ENCODE measurements at regions of chr16 and their contacts with region 1.

Region 1: DNA sequence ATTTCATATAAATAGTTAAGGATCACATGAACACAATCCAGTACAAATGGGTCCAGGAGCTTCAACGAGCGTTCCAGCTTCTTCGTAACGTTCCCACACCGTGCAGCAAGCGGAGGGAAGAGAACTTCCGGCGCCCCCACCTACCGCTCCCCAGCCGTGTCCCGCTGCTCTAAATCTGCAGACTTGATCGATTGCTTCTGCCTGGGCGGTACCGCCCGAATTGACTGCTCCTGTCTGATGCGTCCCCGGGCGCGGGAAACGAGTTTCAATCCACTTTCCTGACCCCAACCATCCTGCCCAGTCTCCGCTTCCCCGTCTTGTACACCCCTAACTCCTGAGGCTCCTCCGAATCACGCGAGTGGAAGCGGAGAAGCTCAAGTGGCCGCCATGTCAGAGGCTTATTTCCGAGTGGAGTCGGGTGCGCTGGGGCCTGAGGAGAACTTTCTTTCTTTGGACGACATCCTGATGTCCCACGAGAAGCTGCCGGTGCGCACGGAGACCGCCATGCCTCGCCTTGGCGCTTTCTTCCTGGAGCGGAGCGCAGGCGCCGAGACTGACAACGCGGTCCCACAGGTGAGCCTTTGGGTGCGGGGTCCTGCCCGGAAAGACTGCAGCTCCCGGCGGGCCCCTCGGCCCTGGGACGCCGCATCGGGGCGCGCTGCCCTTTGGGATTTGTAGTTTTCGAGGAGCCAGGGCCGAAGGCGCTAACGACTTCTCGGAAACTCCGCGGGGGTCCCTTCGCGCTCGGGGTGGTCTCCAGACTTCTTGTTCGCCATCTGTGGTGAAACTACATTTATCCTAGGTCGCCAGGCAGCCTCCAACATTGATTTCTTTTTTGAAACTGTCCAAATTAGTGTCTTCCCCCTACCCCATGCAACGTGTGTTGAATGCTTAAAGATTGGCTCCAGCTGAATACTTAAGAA is at the start of gene GINS3:
- DNase-seq: peak; percentile 82
- H3K4me3 Mint-ChIP-seq: peak within 1 kb of the TSS; percentile 95
- H3K27ac Mint-ChIP-seq: peak within 1 kb of the TSS; percentile 95
- H3K4me1 Mint-ChIP-seq: peaks cover 21% of the 10 kb centered on the region
- H3K27me3 Mint-ChIP-seq: peaks cover 11% of the 10 kb centered on the region
- total RNA-seq, gene GINS3: 23.8 and 25.3 TPM in 2 replicates

Region 2: GRCh38 chr16:58249780-58250478 is 142.5 kb before region 1 on chr16:
- intact Hi-C with region 1: loop called (anchors 1 kb)
- DNase-seq: peak; percentile 83
- H3K4me3 Mint-ChIP-seq: peak overlapping the region; percentile 86
- H3K27ac Mint-ChIP-seq: no peak overlapping the region
- H3K4me1 Mint-ChIP-seq: peaks cover 6% of the 10 kb centered on the region
- H3K27me3 Mint-ChIP-seq: peaks cover 4% of the 10 kb centered on the region

Region 3: DNA sequence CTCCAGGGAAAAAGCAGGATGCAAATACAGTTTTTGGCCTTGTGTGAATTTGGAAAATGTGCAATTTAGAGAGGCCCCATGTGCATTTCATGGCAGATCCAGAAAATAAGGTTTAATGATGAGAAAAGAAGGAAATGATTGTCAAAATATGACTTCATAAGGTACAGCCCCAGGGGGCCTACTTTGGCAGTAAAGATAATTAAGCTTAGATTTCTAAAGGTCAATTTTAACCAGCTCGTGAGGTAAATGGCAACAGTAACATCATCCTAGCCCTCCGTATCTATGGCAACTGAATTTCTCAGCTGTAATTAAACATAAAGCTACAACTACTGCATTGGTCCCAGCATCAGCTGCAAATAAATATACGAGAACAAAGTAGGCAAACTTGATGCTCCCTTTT is 67.7 kb before region 1 on chr16:
- intact Hi-C with region 1: no loop called
- DNase-seq: no peak
- H3K4me3 Mint-ChIP-seq: no peak overlapping the region
- H3K27ac Mint-ChIP-seq: no peak overlapping the region
- H3K4me1 Mint-ChIP-seq: no peaks in the 10 kb centered on the region
- H3K27me3 Mint-ChIP-seq: peaks cover 8% of the 10 kb centered on the region

Region 4: DNA sequence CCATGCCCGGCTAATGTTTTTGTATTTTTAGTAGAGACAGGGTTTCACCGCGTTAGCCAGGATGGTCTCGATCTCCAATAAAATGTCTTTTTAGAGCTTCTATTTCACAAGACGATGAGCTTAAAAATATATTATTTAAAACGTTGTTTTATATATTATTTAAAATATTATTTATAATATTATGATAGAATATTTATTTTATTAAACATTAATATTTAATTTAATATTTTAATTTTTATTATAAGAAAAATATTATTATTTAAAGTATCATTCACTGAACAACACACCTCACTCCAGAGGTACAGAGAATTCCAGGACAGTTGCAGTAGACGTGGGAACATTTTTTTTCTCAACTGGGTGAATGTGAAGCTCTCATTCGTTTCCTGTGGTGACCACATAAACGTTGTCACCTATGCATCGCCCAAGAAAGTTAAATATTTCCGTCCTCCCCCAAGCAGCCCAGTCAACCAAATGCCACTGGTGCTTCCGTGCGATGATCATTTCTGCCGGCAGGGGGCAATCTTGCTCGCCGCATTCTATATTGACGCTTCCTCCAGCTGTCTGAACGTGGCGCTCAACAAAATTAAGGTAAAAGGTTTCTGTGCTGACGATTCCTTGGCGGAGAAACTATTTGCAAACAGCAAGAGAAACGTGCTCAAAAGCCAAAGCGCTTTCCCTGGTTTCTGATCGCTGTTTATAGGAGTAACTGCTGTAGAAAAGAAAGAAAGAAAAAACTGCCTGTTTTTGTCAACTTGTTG is 56.0 kb before region 1 on chr16:
- intact Hi-C with region 1: loop called (anchors 2 kb)
- DNase-seq: peak; percentile 72
- H3K4me3 Mint-ChIP-seq: no peak overlapping the region
- H3K27ac Mint-ChIP-seq: no peak overlapping the region
- H3K4me1 Mint-ChIP-seq: no peaks in the 10 kb centered on the region
- H3K27me3 Mint-ChIP-seq: no peaks in the 10 kb centered on the region

Region 5: DNA sequence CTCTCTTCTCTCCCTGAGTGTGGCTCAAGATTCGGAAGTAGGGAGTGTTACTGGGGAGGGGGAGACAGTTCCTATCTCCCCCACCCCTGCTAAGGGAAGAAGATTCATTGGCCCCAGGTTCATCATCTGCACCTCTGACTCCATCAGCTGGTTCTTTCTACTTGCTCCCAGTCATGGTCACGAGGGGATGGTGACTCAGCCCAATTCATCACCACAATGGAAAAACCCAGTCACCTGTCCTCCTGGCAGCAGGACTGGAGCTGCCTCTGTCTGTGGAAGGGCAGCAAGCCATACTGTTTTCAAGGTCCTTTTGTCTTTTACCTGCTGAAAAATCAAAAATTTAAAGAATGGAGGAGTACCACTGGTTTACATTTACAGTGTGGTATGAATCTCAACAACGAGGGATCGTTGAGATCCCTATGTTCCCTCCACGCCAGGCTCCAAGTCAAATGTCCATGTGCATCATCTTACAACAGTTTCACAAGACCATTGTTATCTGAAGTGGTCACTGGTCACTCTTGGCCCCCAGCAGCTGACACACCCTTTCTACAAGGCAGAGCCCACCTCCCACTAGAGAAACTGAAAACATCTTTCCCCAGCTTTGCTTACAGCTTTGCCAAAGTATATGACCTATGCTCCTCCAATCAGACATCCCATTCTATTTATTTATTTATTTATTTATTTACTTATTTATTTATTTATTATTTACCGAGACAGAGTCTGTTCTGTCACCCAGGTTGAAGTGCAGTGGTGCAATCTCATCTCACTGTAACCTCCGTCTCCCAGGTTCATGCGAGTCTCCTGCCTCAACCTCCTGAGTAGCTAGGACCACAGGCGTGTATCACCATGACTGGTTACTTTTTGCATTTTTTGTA is 67.1 kb after region 1 on chr16:
- intact Hi-C with region 1: loop called (anchors 2 kb)
- DNase-seq: peak; percentile 30
- H3K4me3 Mint-ChIP-seq: no peak overlapping the region
- H3K27ac Mint-ChIP-seq: peak overlapping the region; percentile 62
- H3K4me1 Mint-ChIP-seq: peaks cover 10% of the 10 kb centered on the region
- H3K27me3 Mint-ChIP-seq: peaks cover 30% of the 10 kb centered on the region

Region 6: GRCh38 chr16:58494981-58495520 is 102.6 kb after region 1 on chr16:
- intact Hi-C with region 1: loop called (anchors 1 kb)
- DNase-seq: peak; percentile 65
- H3K4me3 Mint-ChIP-seq: no peak overlapping the region
- H3K27ac Mint-ChIP-seq: peak overlapping the region; percentile 87
- H3K4me1 Mint-ChIP-seq: peaks cover 9% of the 10 kb centered on the region
- H3K27me3 Mint-ChIP-seq: peaks cover 1% of the 10 kb centered on the region

Region 7: DNA sequence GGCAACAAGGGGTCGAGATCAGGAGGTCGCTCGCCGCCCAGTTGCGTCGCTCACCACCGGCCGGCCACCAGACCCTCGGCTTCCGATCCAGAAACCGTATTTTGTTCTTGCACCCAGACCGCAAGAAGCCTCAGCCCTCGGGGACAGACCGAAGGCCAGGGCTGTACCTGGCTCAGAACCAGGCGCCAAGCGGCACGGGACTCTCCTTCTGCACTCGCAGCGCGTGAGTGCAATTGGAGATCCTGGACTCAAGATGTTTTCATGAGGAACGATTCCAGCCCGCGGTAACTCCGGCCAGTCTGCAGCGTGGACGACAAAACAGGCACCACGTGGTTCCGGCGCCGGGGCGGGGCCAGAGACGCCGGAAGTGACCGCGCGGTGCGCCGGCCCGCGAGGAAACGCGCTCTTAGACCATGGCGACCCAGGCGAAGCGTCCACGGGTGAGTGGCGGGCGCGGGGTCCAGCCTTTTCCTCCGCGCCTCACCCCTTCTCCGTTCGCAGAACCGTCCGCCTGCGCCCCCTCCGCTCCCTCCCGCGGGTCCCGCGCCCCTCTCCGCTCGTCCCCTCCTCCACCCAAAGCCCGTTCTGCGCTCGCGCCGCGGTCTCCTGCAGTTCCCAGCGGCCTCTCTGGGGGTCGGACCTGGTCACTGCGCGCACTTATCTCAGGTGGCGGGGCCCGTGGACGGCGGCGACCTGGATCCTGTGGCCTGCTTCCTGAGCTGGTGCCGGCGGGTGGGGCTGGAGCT is 122.8 kb after region 1 on chr16 and contains the start of gene SETD6:
- intact Hi-C with region 1: loop called (anchors 1 kb)
- DNase-seq: peak; percentile 77
- H3K4me3 Mint-ChIP-seq: peak within 1 kb of the TSS; percentile 92
- H3K27ac Mint-ChIP-seq: peak within 1 kb of the TSS; percentile 83
- H3K4me1 Mint-ChIP-seq: peaks cover 36% of the 10 kb centered on the region
- H3K27me3 Mint-ChIP-seq: no peaks in the 10 kb centered on the region
- total RNA-seq, gene SETD6: 32.1 and 34.9 TPM in 2 replicates

Region 8: GRCh38 chr16:58733671-58734458 is 341.4 kb after region 1 on chr16 and contains the start of gene GOT2:
- intact Hi-C with region 1: loop called (anchors 2 kb)
- DNase-seq: peak; percentile 78
- H3K4me3 Mint-ChIP-seq: peak within 1 kb of the TSS; percentile 100
- H3K27ac Mint-ChIP-seq: peak within 1 kb of the TSS; percentile 99
- H3K4me1 Mint-ChIP-seq: peaks cover 27% of the 10 kb centered on the region
- H3K27me3 Mint-ChIP-seq: no peaks in the 10 kb centered on the region
- total RNA-seq, gene GOT2: 135 and 137 TPM in 2 replicates

Region 9: DNA sequence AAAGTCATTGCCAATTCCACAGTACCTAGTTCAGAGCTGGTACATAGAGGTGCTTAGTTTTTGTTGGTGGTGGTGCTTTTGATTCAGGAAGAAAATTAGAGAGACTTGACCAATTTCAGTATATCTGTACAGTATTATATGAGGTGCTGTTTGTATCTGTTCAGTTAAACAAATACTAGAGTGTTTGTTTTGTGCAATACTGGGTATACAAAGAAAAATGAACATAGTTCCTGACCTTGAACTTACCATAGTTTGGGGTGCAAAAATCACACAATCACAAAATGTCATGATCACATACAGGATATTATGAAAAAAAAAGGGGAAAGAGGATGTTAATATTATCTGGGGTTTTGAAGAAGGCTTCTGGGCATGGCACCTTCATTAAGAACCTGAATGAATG is 381.4 kb after region 1 on chr16:
- intact Hi-C with region 1: no loop called
- DNase-seq: no peak
- H3K4me3 Mint-ChIP-seq: no peak overlapping the region
- H3K27ac Mint-ChIP-seq: no peak overlapping the region
- H3K4me1 Mint-ChIP-seq: no peaks in the 10 kb centered on the region
- H3K27me3 Mint-ChIP-seq: peaks cover 2% of the 10 kb centered on the region

Measured in activated T-helper 1 cell treated with anti-CD3 and anti-CD28 coated beads, Interleukin-12 subunit alpha, Interleukin-12 subunit beta, Interleukin-2, Interleukin-4 antibody, amounts not matched to agents 30 ng/mL and 10 ng/mL and 1 ng/mL, durations not matched to agents 14 hours and 24 hours and 36 hours (primary cell).